ENCODE measurements at regions of chr9 and their contacts with region 1.

Region 1: GRCh38 chr9:109887079-109887478 is 107.1 kb downstream of the PALM2AKAP2 start:
- DNase-seq: no peak
- H3K4me3 Mint-ChIP-seq: peak overlapping the region; percentile 64
- H3K27ac Mint-ChIP-seq: peak overlapping the region; percentile 92
- H3K4me1 Mint-ChIP-seq: peaks cover 94% of the 10 kb centered on the region
- H3K27me3 Mint-ChIP-seq: no peaks in the 10 kb centered on the region

Region 2: DNA sequence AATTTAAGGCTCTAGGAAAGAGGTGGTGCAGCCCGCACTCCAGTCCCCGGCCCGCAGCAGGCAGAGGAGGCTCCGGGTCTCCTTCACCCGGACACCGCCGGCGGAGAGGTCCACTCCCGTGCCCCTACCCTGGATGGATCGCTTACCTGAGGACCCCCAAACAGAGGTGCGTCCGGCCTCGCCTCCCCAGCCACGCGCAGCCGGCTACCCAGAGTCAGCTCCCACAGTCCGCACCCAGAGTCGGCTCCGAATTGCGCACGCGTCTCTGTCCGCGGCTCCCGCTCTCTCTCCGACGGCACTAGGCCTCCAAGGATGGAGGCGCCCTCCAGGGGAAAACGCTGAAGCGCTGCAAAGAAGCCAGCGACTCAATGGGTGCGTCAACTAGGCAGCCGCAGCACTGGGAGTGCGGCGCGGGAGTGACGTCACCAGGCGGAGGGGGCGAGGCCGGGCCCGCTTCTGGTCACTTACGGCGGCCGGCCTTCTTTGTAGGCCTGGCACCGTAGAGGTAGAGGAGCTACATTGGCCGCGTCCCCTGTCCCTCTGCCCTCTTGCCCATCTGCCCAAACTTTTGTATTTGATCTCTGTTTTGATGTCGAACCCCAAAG is 953.3 kb before region 1 on chr9 and contains the start of gene ELP1:
- intact Hi-C with region 1: loop called (anchors 5 kb)
- DNase-seq: peak; percentile 90
- H3K4me3 Mint-ChIP-seq: peak within 1 kb of the TSS; percentile 95
- H3K27ac Mint-ChIP-seq: peak within 1 kb of the TSS; percentile 95
- H3K4me1 Mint-ChIP-seq: peaks cover 23% of the 10 kb centered on the region
- H3K27me3 Mint-ChIP-seq: no peaks in the 10 kb centered on the region
- total RNA-seq, gene ELP1: 31.6 and 35.2 TPM in 2 replicates

Region 3: DNA sequence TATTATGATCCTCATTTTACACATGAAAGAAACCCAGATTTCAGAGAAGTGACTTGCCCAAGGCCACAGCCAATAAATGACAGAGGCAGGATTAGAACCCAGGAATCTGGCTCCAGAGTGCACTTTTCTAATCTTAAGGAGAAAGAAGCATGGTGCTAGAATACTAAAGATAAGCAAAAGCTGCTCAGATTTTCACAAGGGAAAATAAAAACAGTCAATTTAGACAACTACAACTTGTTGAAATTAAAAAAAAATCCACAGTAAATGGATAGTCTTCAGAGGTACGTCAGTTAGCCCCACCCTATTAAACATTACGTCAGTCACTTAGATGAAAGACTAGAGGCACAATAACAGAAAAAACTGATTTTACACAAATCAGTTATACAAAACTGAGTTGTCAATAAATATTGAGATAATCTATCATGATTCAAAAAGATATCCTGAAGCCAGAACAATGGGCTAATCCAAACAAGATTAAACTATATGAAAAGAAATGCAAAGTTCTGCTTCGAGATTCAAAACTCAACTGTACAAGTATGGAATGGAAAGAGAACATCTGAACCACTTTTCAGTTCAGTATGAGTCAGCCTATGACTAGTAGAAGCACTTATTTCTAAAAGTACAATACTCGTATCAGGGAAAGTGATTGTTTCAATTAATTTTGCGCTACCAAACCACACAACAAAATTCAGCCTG is 776.6 kb before region 1 on chr9:
- intact Hi-C with region 1: loop called (anchors 1 kb)
- DNase-seq: no peak
- H3K4me3 Mint-ChIP-seq: peak overlapping the region; percentile 51
- H3K27ac Mint-ChIP-seq: peak overlapping the region; percentile 85
- H3K4me1 Mint-ChIP-seq: peaks cover 74% of the 10 kb centered on the region
- H3K27me3 Mint-ChIP-seq: no peaks in the 10 kb centered on the region

Region 4: DNA sequence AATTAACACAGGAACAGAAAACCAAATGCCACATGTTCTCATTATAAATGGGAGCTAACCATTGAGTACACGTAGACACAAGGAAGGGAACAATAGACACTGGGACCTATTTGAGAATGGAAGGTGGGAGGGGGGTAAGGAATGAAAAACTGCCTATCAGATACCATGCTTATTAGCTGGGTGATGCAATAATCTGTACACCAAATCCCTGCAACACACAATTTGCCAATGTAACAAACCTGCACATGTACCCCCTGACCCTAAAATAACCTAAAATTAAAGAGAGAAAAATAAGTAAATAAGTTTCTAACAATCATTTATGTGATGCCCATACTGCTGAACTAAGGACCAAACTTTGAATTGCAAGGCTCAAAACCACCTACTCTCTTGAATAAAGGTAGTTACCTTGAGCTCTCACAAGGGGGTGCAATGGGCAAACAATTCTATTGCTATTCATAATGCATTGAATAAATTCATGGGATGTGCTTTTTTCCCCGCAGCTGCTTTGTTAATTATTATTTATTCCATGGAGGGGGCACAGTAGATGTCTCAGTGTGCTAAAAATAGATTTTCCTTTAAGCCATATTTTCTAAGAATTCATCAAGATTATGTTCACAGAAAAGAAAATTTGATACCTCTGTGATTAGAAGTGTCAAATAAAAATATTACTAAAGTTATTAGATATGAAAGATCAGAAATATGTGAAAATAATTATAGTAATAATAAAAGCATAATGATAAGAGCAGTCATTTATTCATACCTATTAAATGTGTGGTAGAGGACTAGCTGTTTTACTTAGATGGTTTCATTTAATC is 312.8 kb before region 1 on chr9:
- intact Hi-C with region 1: loop called (anchors 5 kb)
- DNase-seq: peak; percentile 14
- H3K4me3 Mint-ChIP-seq: no peak overlapping the region
- H3K27ac Mint-ChIP-seq: no peak overlapping the region
- H3K4me1 Mint-ChIP-seq: no peaks in the 10 kb centered on the region
- H3K27me3 Mint-ChIP-seq: peaks cover 19% of the 10 kb centered on the region

Region 5: DNA sequence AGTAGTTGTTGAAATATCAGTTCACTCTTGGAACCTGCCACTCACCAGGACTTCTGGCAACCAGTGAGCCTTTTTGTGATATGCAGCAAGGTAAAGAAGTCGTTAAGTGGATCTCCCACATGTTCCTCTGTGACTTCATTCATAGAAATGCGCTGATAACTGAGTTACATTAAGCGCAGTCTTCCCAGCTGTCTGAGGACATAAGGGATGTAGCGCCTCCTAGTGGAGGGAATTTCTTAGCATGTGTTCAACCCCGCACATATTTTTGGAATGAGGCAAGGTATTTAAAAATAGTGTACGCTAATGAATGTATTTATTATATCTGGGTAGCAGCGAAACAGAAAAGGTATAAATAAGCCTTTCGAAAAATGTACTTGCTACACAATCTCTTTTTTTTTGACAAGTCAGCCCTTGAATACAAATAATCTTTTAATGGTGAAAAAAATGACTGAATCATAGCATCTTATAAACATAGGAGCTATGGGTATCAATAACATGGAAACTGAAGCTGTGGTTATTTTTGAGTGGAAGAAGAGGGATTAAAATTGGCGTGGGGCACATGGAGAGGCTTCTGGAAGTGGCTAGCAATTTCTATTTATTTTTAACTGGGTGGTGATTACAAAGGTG is 69.1 kb before region 1 on chr9:
- intact Hi-C with region 1: loop called (anchors 5 kb)
- DNase-seq: peak; percentile 22
- H3K4me3 Mint-ChIP-seq: no peak overlapping the region
- H3K27ac Mint-ChIP-seq: no peak overlapping the region
- H3K4me1 Mint-ChIP-seq: peaks cover 9% of the 10 kb centered on the region
- H3K27me3 Mint-ChIP-seq: peaks cover 2% of the 10 kb centered on the region